ENCODE measurements at regions of chr5 and their contacts with region 1.

Region 1: DNA sequence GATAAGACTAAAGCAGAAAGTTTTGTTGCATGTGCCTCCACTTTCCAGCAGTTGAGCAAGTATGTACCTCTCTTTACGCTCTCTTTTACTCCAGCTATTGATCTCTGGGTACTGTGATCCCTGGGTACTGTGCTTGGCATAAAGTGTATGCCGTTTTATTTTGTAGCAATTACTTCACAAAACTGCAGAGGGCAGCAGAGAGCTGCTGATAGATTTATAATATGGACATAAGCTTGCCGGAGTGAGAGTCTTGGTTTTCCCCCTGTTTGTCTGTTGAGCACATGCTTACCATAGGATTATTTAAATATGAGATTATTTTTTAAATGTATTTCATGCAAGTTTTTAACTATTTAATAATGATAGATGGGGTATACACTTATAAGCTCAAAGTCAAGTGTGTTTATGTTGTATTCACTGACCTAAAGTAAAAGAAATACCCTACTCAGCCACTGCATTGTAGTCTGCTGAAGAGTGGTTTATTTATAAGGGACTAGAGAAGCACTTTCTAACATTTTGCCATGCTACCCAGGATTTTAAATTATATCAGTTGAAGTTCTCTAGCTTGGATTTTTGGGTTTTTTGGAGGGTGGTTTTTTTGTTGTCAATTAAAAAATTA is 13.0 kb downstream of the TTC1 start:
- DNase-seq: peak; percentile 74
- H3K4me3 ChIP-seq: no peak overlapping the region
- H3K27ac ChIP-seq: no peak overlapping the region
- H3K4me1 ChIP-seq: peaks cover 31% of the 10 kb centered on the region
- H3K27me3 ChIP-seq: no peaks in the 10 kb centered on the region
- CTCF ChIP-seq: peak; percentile 75

Region 2: GRCh38 chr5:160105686-160106360 is 83.9 kb after region 1 on chr5:
- CTCF ChIA-PET with region 1: interaction called, 10 read pairs
- POLR2A ChIA-PET with region 1: no interaction called
- intact Hi-C with region 1: no loop called
- DNase-seq: no peak
- H3K4me3 ChIP-seq: no peak overlapping the region
- H3K27ac ChIP-seq: no peak overlapping the region
- H3K4me1 ChIP-seq: peaks cover 44% of the 10 kb centered on the region
- H3K27me3 ChIP-seq: no peaks in the 10 kb centered on the region
- CTCF ChIP-seq: no peak

Region 3: GRCh38 chr5:160390787-160391696 is 369.1 kb after region 1 on chr5:
- CTCF ChIA-PET with region 1: interaction called, 11 read pairs
- POLR2A ChIA-PET with region 1: interaction called, 3 read pairs
- intact Hi-C with region 1: loop called (anchors 5 kb)
- DNase-seq: peak; percentile 32
- H3K4me3 ChIP-seq: no peak overlapping the region
- H3K27ac ChIP-seq: no peak overlapping the region
- H3K4me1 ChIP-seq: no peaks in the 10 kb centered on the region
- H3K27me3 ChIP-seq: no peaks in the 10 kb centered on the region
- CTCF ChIP-seq: peak; percentile 63

Measured in A673 (cell line).